ENCODE measurements at regions of chr19 and their contacts with region 1.

Region 1: DNA sequence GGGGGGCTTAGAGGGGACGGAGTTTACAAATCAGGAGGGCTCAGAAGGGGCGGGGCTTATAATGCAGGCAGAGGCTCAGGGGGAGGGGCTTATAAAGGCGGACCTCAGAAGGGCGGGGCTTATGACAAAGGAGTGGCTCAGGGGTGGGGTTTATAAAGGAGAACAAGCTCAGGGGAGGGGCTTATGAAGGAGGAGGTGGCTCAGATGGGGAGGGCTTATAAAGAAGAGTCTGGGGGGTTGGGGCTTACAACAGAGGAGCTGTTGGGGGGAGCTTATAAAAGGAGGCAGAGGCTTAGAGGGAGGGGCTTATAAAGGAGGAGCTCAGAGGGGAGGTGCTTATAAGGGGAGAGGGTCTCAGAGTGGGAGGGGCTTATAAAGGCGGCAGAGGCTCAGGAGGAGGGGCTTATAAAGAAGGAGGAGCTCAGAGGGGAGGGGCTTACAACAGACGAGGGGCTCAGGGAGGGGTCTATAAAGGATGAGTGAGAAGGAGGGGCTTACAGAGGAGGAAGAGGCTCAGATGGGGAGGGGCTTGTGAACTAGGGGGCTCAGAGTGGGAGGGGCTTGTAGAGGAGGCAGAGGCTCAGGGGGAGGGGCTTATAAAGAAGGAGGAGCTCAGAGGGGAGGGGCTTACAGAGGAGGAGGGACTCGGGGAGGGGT is 1.0 kb downstream of the SMIM24 start:
- DNase-seq: peak; percentile 69
- CTCF ChIP-seq: no peak

Region 2: DNA sequence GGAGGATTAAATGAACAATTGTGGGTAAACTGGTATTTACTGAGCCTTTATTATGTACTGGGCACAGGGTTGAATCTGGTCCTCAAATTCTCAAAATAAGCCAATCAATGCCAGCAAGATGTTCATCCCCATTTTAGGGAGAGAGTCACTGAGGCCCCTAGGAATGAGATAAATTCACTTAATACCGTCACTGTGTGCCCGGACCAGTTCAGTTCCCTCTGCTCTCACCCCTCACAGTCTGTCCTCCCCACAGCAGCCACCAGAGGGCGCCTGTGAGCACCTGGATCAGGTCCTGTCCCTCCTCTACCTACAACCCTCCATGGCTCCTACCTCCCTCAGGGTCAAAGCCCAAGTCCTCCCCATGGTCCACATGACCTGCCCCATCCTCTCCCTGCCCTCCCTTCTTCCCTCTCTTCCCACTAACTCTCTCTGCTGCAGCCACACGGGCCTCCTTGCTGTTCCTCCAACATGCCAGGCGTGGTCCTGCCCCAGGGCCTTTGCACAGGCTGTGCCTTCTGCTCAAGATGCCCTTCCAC is 154.9 kb before region 1 on chr19:
- CTCF ChIA-PET with region 1: interaction called, 34 read pairs
- POLR2A ChIA-PET with region 1: no interaction called
- DNase-seq: peak; percentile 73
- CTCF ChIP-seq: peak; percentile 65

Region 3: GRCh38 chr19:3387645-3388589 is 91.4 kb before region 1 on chr19:
- CTCF ChIA-PET with region 1: no interaction called
- POLR2A ChIA-PET with region 1: no interaction called
- DNase-seq: no peak
- CTCF ChIP-seq: no peak

Region 4: DNA sequence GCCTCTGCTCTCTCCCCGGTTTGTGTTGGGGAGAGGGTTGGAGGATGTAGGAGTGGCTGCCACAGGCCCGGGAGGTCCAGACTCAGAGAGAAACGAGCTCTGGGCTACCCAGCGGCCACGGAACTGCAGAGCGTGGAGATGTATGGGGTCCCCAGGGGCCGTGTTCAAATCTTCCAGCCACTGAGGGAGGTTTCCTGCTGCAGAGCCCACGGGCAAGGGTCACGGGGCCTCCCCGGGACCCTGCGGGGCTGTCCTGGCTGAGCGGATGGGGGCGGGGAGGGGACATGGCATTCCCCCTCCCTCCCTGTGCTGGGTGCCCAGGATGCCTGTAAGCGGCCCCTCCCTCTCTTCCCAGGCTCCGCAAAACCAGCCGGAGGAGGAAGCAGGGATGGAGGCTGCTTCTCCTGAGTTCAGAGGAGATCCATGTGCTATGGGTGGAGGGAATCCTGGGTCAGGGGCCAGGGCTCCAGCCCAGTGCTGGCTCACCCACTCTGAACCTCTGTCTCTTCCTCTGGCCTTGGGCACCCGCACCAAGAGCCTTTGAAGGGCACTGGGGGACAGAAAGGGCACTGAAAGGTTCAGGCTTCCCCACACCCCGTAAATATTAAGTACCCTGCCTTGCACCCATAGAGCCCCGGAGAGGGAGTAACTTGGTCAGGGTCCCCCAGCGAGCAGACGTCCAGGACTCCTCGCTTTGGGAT is 21.6 kb before region 1 on chr19:
- CTCF ChIA-PET with region 1: no interaction called
- POLR2A ChIA-PET with region 1: no interaction called
- DNase-seq: no peak
- CTCF ChIP-seq: no peak

Region 5: DNA sequence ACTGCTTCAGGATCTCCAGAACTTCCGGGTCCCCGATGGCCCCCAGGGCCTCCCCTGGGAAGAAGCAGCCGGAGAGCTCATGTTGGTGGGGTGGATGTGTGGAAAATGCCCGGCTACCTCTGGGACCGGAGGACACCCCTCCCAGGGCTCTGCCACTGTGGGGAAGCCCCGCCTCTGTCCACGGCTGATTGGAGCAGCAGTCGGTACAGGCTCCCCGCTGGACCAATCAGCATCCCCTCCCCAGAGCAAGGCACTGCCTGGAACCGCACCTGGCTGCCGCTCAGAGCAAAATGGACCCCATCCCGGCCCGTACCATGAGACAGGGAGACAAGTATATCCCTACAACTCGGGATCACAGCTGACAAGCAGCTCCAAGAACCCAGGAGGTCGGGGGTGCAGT is 14.7 kb after region 1 on chr19:
- CTCF ChIA-PET with region 1: interaction called, 20 read pairs
- POLR2A ChIA-PET with region 1: no interaction called
- DNase-seq: no peak
- CTCF ChIP-seq: no peak

Region 6: GRCh38 chr19:3710265-3710812 is 231.0 kb after region 1 on chr19:
- CTCF ChIA-PET with region 1: no interaction called
- POLR2A ChIA-PET with region 1: no interaction called
- DNase-seq: no peak
- CTCF ChIP-seq: no peak